ENCODE measurements at regions of chr13 and their contacts with region 1.

Region 1: DNA sequence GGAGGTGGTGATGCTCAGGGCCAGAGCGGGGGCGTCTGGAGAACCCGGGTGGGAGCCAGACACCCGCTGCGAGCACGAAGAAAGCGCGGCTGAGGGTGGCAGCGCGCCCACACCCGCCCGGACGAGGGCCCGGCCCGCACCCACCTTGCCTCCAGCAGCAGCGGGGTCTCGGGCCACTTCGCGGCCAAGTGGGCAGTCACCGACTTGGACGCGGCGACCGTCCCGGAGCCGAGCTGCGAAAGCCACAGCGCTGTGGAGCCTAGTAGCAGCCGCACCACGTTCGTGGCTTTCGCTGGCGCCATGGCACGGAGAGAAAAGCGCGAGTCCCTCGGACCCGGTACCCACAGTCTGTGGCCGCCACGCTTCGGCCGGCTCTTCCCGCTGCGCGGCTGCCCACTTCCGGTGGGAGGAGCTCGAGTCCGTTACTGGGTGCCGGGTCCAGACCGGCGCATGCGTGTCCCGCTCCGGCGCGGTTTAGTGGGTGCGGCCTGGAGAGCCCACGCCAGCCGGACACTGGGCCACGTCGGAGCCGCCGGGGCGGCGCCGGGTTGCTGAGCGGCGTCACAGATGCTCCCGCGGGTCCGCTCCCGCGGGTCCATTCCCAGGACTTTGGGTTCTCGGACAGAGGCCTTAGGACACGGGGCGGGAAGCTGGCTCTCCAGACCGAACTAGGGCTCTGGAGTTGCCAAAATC is at the start of gene UGGT2:
- DNase-seq: peak; percentile 77 to 96
- H3K4me3 ChIP-seq: peak within 1 kb of the TSS; percentile 73 to 89
- H3K27ac ChIP-seq: peak within 1 kb of the TSS; percentile 81 to 94
- H3K4me1 ChIP-seq: no peaks in the 10 kb centered on the region
- H3K27me3 ChIP-seq: no peaks in the 10 kb centered on the region
- CTCF ChIP-seq: no peak
- total RNA-seq, gene UGGT2: 26.0 TPM

Region 2: GRCh38 chr13:95955255-95955654 is 97.9 kb before region 1 on chr13:
- intact Hi-C with region 1: no loop called
- DNase-seq: no peak
- H3K4me3 ChIP-seq: no peak overlapping the region
- H3K27ac ChIP-seq: no peak overlapping the region
- H3K4me1 ChIP-seq: no peaks in the 10 kb centered on the region
- H3K27me3 ChIP-seq: no peaks in the 10 kb centered on the region
- CTCF ChIP-seq: no peak

Region 3: GRCh38 chr13:96817336-96817941 is 764.3 kb after region 1 on chr13:
- intact Hi-C with region 1: loop called (anchors 2 kb)
- DNase-seq: no peak
- H3K4me3 ChIP-seq: no peak overlapping the region
- H3K27ac ChIP-seq: no peak overlapping the region
- H3K4me1 ChIP-seq: peaks cover 10 to 38% of the 10 kb centered on the region in 2 donors
- H3K27me3 ChIP-seq: no peaks in the 10 kb centered on the region
- CTCF ChIP-seq: peak in 2 of 3 experiments; percentile 50 to 65

Measured in ascending aorta (tissue), 2 donors.